ENCODE measurements at regions of chr6 and their contacts with region 1.

Region 1: GRCh38 chr6:157161912-157162311 is 161.4 kb downstream of the TMEM242 start:
- DNase-seq: no peak
- ATAC-seq: no peak

Region 2: DNA sequence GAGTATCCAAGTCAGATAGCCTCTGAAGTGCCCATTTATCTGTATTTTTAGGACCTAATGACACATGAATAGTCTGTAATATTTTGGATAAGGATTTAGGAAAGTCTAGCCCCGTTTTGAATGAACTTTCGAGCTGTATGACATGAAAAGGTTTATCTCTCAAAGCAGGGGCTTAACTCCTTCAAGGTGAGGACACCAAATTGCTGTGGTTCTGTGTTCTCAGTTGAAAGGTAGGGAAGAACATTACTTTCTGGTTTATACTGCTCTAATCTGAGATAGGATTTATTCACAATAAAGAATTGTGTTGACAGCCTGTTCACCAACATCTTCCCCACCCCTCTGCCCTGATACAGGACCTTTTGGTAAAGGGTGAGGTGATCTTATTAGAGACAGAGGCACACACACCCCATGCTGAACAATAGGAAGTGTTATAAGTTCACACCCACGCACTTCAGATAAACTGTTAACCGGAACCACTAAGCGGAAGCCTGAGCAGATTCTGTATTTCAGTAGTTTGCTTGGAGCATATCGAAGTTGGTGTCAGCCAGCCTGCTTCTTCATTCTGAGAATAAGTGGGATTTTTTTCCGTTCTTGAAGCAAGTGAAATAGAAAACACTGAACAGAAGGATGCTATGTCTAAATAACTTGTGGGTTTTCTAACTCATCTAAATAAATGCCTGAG is 61.9 kb before region 1 on chr6:
- intact Hi-C with region 1: no loop called
- DNase-seq: no peak
- ATAC-seq: peak; percentile 48

Region 3: GRCh38 chr6:157148391-157149323 is 13.3 kb before region 1 on chr6:
- intact Hi-C with region 1: no loop called
- DNase-seq: no peak
- ATAC-seq: peak; percentile 74

Region 4: DNA sequence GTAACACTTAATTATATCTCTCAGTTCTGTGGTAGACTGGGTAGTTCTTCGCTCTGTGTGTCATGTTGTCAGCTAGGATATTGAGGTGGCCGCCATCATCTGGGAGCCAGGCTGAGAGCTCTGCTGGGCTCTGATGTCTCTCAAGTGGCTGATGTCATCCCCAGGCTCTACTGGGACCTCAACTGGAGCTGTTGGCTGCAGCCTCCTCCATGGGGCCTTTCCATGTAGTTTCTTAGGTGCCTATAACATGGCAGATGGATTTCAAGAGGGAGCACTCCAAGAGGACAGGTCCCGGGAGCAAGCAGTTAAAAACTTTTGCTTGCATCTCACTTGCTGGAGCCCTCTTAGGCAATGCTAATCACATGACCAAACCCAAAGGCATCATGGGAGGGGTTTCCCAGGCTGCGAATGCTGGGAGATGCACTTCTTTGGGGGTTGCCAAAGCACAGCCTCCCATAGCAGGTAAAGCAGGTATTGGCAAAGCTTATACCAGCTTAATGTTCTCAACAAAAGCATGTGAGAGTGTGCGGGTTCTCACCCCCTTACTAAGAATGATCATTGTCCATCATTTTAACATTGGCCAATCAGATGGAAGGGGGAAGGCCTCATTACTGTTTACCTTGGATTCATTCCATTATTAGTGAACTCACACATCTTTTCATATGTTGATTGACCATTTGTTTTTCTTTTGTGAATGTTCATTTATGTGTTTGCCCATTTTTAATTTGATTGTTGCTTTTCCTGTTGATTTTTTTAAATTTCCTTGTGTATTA is 31.7 kb after region 1 on chr6:
- intact Hi-C with region 1: loop called (anchors 2 kb)
- DNase-seq: no peak
- ATAC-seq: no peak

Measured in Right ventricle myocardium inferior (tissue), 1 donor.